Activated T-helper 1 cell treated with anti-CD3 and anti-CD28 coated beads, Interleukin-12 subunit alpha, Interleukin-12 subunit beta, Interleukin-2, Interleukin-4 antibody, amounts not matched to agents 30 ng/mL and 10 ng/mL and 1 ng/mL, durations not matched to agents 14 hours and 24 hours and 36 hours (primary cell): ENCODE measurements at regions of chr9 and their contacts with region 1.

Region 1: GRCh38 chr9:89710697-89711096 is 105.9 kb downstream of the GADD45G start:
- DNase-seq: no peak
- H3K4me3 Mint-ChIP-seq: peak overlapping the region; percentile 37
- H3K27ac Mint-ChIP-seq: peak overlapping the region; percentile 87
- H3K4me1 Mint-ChIP-seq: peaks cover 85% of the 10 kb centered on the region
- H3K27me3 Mint-ChIP-seq: no peaks in the 10 kb centered on the region

Region 2: GRCh38 chr9:89579741-89580385 is 130.8 kb before region 1 on chr9:
- intact Hi-C with region 1: no loop called
- DNase-seq: peak; percentile 17
- H3K4me3 Mint-ChIP-seq: no peak overlapping the region
- H3K27ac Mint-ChIP-seq: no peak overlapping the region
- H3K4me1 Mint-ChIP-seq: peaks cover 16% of the 10 kb centered on the region
- H3K27me3 Mint-ChIP-seq: peaks cover 59% of the 10 kb centered on the region

Region 3: GRCh38 chr9:89675058-89675742 is 35.5 kb before region 1 on chr9:
- intact Hi-C with region 1: no loop called
- DNase-seq: no peak
- H3K4me3 Mint-ChIP-seq: no peak overlapping the region
- H3K27ac Mint-ChIP-seq: no peak overlapping the region
- H3K4me1 Mint-ChIP-seq: peaks cover 16% of the 10 kb centered on the region
- H3K27me3 Mint-ChIP-seq: peaks cover 2% of the 10 kb centered on the region

Region 4: GRCh38 chr9:89723469-89724095 is 12.9 kb after region 1 on chr9:
- intact Hi-C with region 1: no loop called
- DNase-seq: no peak
- H3K4me3 Mint-ChIP-seq: no peak overlapping the region
- H3K27ac Mint-ChIP-seq: no peak overlapping the region
- H3K4me1 Mint-ChIP-seq: peaks cover 42% of the 10 kb centered on the region
- H3K27me3 Mint-ChIP-seq: no peaks in the 10 kb centered on the region

Region 5: DNA sequence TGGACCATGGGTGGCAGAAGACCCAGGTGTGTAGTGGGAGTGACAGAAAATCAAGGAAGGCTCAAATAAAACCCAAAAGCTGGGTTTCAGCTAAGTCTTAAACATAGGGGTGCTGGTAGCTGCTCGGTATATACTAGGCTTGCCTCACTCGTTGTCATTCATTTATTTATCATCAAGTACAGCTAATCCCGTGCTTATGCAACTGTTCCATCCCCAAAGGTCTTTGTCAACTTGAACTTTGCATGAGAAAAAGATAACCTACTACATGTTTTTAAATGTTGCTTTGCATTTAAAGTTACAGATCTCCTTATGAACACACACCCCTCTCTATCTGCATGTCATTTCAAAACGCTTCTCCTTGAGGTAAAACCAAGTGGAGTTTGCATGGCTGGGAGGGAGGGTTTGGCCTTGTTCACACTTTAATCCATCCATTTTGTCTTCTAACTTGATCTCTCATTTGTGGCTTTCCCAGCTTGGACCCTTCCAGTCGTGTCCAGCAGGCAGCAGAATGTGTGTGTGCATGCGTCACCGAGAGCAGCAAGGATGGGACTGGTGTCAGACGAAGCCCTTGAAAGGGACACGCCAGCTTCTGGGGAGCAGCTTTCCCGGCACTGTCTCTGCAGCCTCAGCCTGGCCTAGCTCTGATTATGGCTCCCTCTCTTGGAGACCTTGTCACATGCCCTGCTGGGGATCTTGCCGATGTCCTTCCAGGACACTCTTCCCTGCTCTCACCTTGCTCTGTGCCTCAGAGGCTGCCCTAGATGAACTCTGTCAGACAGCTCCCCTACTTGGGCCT is 27.6 kb after region 1 on chr9:
- intact Hi-C with region 1: loop called (anchors 2 kb)
- DNase-seq: no peak
- H3K4me3 Mint-ChIP-seq: no peak overlapping the region
- H3K27ac Mint-ChIP-seq: peak overlapping the region; percentile 86
- H3K4me1 Mint-ChIP-seq: peaks cover 70% of the 10 kb centered on the region
- H3K27me3 Mint-ChIP-seq: no peaks in the 10 kb centered on the region